Activated T-helper 2 cell treated with anti-CD3 and anti-CD28 coated beads, Interferon-gamma antibody, Interleukin-2, Interleukin-4, amounts not matched to agents 10 μg/mL and 5 μg/mL and 100 μg/mL, durations not matched to agents 14 hours and 24 hours and 36 hours (primary cell): ENCODE measurements at regions of chrX and their contacts with region 1.

Region 1: GRCh38 chrX:19776753-19777152 is 110.6 kb downstream of the SH3KBP1 start:
- DNase-seq: peak; percentile 25
- H3K4me3 Mint-ChIP-seq: no peak overlapping the region
- H3K27ac Mint-ChIP-seq: peak overlapping the region; percentile 78
- H3K4me1 Mint-ChIP-seq: peaks cover 45% of the 10 kb centered on the region
- H3K27me3 Mint-ChIP-seq: no peaks in the 10 kb centered on the region

Region 2: DNA sequence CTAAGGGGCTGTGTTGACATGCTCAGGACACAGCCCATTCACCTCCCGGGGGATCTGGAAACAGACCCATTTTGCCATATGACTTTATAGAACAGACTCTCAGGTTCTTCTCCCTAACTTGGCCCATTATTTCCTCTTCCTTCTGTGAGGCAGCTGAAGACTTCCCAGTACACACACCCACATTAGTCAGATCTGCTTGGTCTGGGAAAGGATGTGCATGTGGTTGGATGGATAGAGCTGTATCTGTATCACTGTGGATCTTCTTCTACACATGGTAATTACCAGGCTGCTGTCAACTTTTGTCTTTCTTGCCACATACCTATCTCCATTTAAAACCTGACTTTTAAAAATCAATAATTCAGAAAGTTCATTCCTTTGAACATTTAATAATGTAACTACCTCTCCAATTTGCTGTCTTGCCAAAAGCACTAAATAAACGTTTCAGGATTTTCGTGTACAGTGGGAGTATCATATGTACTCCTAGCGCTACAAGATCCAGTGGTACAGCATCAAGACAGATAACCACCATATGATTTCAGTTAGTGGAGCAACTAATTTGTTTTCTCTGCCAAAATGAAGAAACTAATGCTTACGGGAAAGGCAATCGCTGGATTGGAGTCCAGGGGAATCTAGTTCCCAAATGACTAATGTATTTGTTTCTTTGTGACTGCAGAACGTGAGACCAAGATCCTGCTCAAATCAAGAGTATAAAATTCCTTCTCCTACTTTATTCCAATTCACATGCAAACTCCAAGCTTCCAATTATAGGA is 127.3 kb before region 1 on chrX:
- intact Hi-C with region 1: no loop called
- DNase-seq: no peak
- H3K4me3 Mint-ChIP-seq: no peak overlapping the region
- H3K27ac Mint-ChIP-seq: no peak overlapping the region
- H3K4me1 Mint-ChIP-seq: peaks cover 31% of the 10 kb centered on the region
- H3K27me3 Mint-ChIP-seq: no peaks in the 10 kb centered on the region

Region 3: GRCh38 chrX:19739683-19740082 is 37.1 kb before region 1 on chrX:
- intact Hi-C with region 1: loop called (anchors 5 kb)
- DNase-seq: peak; percentile 22
- H3K4me3 Mint-ChIP-seq: no peak overlapping the region
- H3K27ac Mint-ChIP-seq: no peak overlapping the region
- H3K4me1 Mint-ChIP-seq: peaks cover 53% of the 10 kb centered on the region
- H3K27me3 Mint-ChIP-seq: no peaks in the 10 kb centered on the region

Region 4: GRCh38 chrX:19791562-19791961 is 14.8 kb after region 1 on chrX:
- intact Hi-C with region 1: loop called (anchors 2 kb)
- DNase-seq: no peak
- H3K4me3 Mint-ChIP-seq: peak overlapping the region; percentile 33
- H3K27ac Mint-ChIP-seq: peak overlapping the region; percentile 82
- H3K4me1 Mint-ChIP-seq: peaks cover 44% of the 10 kb centered on the region
- H3K27me3 Mint-ChIP-seq: no peaks in the 10 kb centered on the region

Region 5: GRCh38 chrX:19840899-19841648 is 64.3 kb after region 1 on chrX:
- intact Hi-C with region 1: loop called (anchors 2 kb)
- DNase-seq: peak; percentile 59
- H3K4me3 Mint-ChIP-seq: peak overlapping the region; percentile 68
- H3K27ac Mint-ChIP-seq: peak overlapping the region; percentile 94
- H3K4me1 Mint-ChIP-seq: peaks cover 48% of the 10 kb centered on the region
- H3K27me3 Mint-ChIP-seq: no peaks in the 10 kb centered on the region